Ascending aorta (tissue), 2 donors: ENCODE measurements at regions of chr14 and their contacts with region 1.

Region 1: GRCh38 chr14:50532502-50533240 is at the start of gene MAP4K5:
- DNase-seq: peak; percentile 61 to 95
- H3K4me3 ChIP-seq: peak within 1 kb of the TSS; percentile 74 to 77
- H3K27ac ChIP-seq: peak within 1 kb of the TSS; percentile 86 to 97
- H3K4me1 ChIP-seq: peaks cover 4 to 17% of the 10 kb centered on the region in 2 donors
- H3K27me3 ChIP-seq: no peaks in the 10 kb centered on the region
- CTCF ChIP-seq: peak; percentile 94 to 97 (median 95)
- total RNA-seq, gene MAP4K5: 249 TPM

Region 2: DNA sequence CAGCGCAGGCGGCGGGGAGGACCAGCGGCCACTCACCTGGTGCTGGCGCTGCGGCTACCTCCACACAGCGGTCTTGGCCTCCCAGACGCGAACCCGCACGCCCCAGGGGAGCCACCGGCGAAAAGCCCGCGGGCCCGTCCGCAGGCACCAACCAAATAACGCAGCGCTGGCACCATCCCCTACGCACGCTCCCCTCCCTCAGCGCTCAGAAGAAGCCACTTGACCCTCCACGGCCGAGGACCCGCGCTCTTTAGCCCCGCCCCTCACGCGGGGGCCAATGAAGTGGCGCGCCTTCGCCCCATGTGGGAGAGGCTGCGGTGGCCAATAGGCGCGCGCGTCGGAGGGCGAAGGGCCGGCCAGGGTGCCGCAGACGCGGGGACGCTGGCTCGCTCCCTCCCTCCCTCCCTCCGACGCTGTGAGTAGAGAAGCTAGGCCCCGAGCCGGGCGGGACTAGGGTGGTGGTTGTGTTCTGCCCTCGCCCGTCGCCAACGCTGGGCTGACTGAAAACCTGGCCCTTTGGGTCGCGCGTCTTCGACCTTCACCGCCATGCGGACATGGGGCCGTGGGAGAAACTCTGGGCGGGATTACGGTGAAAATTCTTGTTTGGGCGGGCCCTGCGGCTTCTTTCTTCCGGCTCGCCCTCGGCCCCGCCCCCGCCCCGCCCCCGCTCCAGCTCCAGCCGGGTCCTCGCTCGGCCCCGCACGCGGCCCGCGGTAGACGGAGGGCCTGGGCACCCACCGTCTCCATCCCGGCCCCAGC is 220.5 kb before region 1 on chr14 and contains the starts of genes DMAC2L and L2HGDH:
- intact Hi-C with region 1: loop called (anchors 2 kb)
- DNase-seq: peak; percentile 71 to 95
- H3K4me3 ChIP-seq: peak within 1 kb of the TSS; percentile 67 to 90
- H3K27ac ChIP-seq: peak within 1 kb of the TSS; percentile 89 to 92
- H3K4me1 ChIP-seq: peaks cover 0 to 8% of the 10 kb centered on the region in 2 donors
- H3K27me3 ChIP-seq: no peaks in the 10 kb centered on the region
- CTCF ChIP-seq: no peak
- total RNA-seq, gene DMAC2L: 13.5 TPM
- total RNA-seq, gene L2HGDH: 1.5 TPM

Region 3: DNA sequence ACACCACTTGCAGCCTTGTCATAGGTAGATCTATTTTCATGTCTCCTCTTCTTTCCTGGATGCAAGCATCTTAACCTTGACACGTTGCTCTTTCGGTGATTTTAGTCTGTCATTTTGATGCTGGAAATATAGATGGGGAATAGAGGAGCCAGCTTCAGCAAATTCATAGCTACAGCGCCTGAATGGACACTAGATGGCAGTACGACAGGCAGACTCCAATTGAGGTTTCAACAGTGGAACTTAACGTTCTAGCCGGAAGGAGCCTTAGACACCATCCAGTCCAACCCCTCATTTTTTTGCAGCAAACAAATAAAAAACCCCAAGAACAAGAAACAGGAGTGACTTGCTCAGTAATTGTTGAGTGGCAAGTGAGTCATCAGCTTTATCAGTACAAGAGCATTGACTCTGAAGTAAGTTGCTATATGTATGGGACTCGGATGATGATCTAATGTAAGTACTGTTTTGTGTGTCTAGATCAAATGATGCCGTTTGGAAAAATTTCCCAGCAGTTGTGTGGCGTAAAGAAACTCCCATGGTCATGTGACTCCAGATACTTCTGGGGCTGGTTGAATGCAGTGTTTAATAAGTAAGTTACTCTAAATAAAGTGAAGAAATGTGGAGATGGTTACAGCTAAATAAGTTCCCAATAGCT is 211.5 kb before region 1 on chr14:
- intact Hi-C with region 1: loop called (anchors 1 kb)
- DNase-seq: peak in 1 of 2 donors; percentile 80
- H3K4me3 ChIP-seq: peak overlapping the region in 1 of 2 donors; percentile 57
- H3K27ac ChIP-seq: peak overlapping the region; percentile 75 to 84
- H3K4me1 ChIP-seq: peaks cover 0 to 4% of the 10 kb centered on the region in 2 donors
- H3K27me3 ChIP-seq: no peaks in the 10 kb centered on the region
- CTCF ChIP-seq: peak; percentile 78 to 86 (median 83)

Region 4: GRCh38 chr14:50447461-50447860 is 85.2 kb before region 1 on chr14:
- intact Hi-C with region 1: loop called (anchors 5 kb)
- DNase-seq: no peak
- H3K4me3 ChIP-seq: no peak overlapping the region
- H3K27ac ChIP-seq: no peak overlapping the region
- H3K4me1 ChIP-seq: no peaks in the 10 kb centered on the region
- H3K27me3 ChIP-seq: no peaks in the 10 kb centered on the region
- CTCF ChIP-seq: no peak

Region 5: DNA sequence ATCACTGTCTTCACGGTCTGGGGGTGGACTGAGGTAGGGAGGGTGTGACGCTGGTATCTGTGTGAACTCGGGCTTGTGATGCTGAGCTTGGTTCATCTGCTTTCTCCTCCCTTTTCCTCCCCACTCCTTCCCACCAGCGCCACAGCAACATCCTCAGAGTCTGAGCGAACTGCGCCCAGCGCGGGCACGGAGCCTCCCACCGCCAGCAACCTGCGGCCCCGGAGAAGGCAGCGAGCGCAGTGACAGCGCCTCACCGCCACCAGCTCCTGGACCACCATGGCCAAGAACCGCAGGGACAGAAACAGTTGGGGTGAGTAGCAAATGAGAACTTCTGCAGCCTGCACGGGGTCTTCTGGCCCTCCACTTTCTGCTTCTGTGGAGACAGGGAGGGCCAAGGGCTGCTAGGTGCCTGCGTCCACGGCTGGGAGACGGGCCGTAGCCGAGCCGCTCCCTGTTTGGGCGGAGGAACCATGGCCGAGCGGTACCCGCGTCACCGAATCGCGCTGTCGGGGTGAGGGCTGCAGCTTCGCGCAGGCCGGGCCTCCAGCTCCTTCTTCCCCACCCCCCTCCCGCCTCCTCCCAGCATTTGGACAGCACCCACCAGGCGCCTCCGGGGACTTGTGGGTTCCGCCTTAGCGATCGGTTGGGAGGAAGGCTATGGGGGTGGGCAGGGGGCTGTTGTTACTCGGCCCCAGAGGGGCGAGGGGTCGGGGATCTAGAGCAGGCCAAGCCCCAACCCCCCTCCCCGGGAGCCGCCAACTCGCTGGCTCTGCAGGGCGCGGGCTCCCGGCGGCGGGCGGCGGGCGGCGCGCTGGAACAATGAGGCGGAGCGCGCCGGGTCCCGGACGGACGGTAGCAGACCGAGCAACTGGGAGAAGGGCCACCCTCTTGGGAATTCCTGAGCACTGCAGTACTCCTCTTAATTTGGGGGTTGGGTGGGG is 27.6 kb after region 1 on chr14 and contains the start of gene ATL1:
- intact Hi-C with region 1: loop called (anchors 2 kb)
- DNase-seq: peak; percentile 15 to 86
- H3K4me3 ChIP-seq: peak within 1 kb of the TSS; percentile 60 to 78
- H3K27ac ChIP-seq: peak within 1 kb of the TSS; percentile 91 to 93
- H3K4me1 ChIP-seq: peaks cover 0 to 8% of the 10 kb centered on the region in 2 donors
- H3K27me3 ChIP-seq: no peaks in the 10 kb centered on the region
- CTCF ChIP-seq: no peak
- total RNA-seq, gene ATL1: 1.2 TPM